ENCODE measurements at regions of chr10 and their contacts with region 1.

Region 1: DNA sequence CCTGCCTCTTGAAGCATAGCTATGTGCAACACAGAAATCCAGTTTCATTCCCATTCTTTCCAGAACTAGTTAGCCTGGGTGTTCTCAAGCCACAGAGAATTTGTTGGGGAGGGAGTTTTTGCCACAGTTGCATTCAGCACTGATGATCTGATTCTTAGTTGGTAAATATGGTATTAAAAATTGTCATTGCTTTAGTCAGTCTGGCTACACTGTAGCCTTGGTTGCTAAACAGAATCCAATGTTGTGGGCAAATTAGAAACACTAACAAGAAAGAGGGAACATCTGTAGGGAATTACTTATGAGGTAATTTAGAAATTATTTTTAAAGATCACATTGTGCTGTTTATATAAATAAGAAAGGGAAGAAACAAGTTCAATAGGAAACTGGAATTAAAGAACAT is 57.0 kb upstream of the CC2D2B start:
- DNase-seq: no peak
- CTCF ChIP-seq: no peak

Region 2: DNA sequence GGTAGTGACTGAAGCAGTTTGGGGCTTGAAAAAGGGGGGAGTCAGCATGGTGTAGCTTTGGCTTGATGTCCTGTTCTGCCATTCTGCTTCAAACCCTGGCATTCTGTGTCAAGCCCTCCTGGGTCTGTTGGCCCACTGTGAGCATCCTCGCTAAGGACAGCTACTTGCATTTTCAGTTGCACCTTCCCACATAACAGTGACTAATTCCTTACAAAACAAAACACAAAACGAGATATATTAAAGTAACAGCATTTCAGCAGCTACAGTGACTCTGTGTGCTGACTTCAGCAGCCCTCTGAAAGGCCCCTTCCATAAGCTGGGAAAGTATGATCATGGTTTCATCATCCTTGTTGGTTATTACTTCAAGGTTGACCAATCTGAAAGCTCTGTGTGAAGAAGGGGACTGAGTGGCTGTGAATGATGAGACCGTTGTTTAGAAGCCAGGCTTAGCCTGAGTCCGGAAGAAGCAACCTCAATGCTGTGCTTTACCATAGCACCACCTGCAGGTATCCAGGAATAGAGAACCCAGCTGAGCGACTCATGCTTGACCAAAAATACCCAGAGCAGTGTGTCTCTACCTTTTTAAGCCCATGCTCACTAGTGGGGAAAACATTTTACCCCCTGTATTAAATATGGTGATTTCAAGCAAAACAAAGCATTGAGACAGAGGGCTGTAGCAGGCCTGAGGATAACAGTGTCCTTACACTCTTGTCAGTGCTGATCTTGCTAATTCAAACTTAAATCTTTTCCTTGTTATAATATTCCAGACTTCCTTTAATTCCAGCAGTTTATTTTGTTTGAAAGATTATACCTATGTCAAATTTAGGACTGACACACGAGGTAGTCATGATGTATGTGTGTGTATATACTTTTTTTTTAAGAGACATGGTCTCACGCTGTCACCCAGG is 14.4 kb after region 1 on chr10:
- CTCF ChIA-PET with region 1: interaction called, 25 read pairs
- POLR2A ChIA-PET with region 1: no interaction called
- DNase-seq: peak; percentile 65
- CTCF ChIP-seq: peak; percentile 52

Region 3: GRCh38 chr10:95896071-95896846 is 45.5 kb after region 1 on chr10:
- CTCF ChIA-PET with region 1: no interaction called
- POLR2A ChIA-PET with region 1: no interaction called
- DNase-seq: no peak
- CTCF ChIP-seq: no peak

Measured in GM10248 (cell line).